Ascending aorta (tissue), 2 donors: ENCODE measurements at regions of chr18 and their contacts with region 1.

Region 1: DNA sequence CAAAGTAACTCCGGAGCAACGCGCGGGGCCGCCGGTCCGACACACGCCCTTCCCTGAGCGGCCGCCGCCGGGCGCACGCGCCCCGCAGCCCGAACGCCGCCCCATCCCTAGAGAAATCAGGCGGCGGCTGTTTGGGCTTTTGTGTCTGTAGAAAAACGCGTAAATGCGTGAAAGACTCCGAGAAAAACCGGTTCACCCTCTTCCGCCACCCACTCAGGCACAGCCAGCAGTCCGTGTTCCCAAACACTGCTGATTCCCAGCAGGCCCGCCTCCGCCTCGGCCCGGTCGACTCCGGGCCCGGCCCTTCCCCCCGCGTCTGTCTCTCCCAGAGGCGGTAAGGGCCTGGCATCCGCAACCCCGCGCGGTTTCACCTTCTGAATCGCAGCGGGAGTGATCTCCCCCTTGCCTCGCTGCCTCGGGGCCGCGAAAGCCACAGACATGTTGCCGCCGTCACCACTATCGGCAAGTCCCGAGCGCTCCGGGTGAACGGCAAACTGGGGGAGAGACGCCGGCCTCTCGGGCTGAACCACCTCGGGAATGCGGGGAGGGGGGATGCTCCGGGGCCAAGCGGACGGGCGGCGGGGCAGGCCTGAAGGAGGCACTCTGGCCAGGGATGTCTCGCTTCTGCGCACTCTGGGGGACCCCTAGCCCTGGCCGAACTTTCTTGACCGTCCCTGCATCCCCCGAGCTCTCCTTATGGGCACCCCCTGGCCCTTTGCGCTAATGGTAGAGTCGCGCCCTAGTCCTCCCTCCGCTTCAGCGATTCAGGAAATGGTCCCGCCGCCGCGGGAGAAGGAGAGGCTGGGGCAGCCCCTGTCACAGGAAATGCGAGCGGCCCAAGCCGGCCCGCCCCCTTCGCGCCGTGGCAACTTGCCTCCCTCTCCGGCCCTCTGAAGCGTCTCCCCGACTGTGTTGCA is at the start of gene SS18:
- DNase-seq: peak; percentile 67 to 97
- H3K4me3 ChIP-seq: peak within 1 kb of the TSS; percentile 79 to 94
- H3K27ac ChIP-seq: peak within 1 kb of the TSS; percentile 97 to 99
- H3K4me1 ChIP-seq: peaks cover 0 to 13% of the 10 kb centered on the region in 2 donors
- H3K27me3 ChIP-seq: no peaks in the 10 kb centered on the region
- CTCF ChIP-seq: peak in 1 of 3 experiments; percentile 4
- total RNA-seq, gene SS18: 31.0 TPM

Region 2: DNA sequence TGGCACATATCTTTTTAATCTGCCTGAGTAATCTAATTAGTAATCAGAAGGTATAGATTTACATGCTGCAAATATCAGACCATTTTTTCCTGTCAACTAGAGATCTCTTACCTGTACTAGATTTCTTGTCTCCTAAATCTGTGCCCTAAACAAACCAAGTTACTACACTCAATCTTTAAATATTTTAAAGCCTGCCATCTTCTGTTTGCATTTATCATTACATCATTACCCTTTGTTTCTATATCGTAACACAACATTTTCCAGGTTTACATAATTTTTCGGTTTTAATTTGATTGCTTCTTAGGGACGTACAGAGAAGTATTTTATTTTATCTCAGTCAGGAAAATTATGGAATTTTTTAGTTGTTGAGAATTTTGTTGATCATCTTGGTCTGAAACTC is 69.0 kb after region 1 on chr18:
- intact Hi-C with region 1: no loop called
- DNase-seq: no peak
- H3K4me3 ChIP-seq: no peak overlapping the region
- H3K27ac ChIP-seq: no peak overlapping the region
- H3K4me1 ChIP-seq: no peaks in the 10 kb centered on the region
- H3K27me3 ChIP-seq: no peaks in the 10 kb centered on the region
- CTCF ChIP-seq: no peak

Region 3: DNA sequence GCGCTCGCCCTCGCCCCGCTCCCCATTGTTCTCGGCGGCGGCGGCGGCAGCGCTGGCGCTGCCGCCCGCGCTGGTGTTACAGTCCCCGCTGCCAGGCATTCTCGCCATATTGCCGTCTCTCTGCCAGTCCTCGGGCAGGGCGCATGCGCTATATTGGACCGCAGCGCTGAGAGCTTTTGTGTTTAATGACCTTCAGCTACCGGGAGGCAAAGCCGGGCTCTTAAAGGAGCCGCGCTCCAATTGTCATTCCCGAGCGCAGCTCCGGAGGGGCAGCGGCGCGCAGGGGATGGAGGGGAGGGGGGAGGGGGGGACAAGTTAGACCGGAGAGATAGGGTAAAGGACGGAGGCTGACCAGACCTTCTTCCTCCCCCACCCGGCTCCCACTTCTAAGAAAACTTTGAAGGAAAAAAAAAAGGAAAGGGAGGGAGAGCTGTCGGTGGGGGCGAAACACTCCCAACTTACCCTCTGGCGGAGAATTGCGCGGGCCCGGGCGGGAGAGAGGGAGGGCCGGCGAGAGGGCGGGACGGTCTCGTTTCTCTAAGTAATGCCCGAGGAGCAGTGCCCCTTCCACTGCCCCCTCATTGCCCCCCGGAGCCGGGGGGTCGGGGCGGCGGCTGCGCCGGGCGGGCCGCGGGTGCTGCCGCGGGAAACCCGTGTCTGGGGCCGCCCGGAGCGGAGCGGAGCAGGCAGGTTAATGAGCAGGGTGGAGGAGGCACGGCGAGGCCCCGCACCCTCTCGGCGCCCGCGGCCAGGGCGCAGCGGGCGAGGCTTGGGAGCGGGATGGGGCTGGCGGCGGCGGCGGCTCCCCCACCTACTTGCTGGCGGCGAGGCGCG is 458.3 kb after region 1 on chr18 and contains the start of gene KCTD1:
- intact Hi-C with region 1: loop called (anchors 5 kb)
- DNase-seq: peak; percentile 18 to 89
- H3K4me3 ChIP-seq: peak within 1 kb of the TSS; percentile 91 to 92
- H3K27ac ChIP-seq: peak within 1 kb of the TSS; percentile 84
- H3K4me1 ChIP-seq: peaks cover 3 to 17% of the 10 kb centered on the region in 2 donors
- H3K27me3 ChIP-seq: no peaks in the 10 kb centered on the region
- CTCF ChIP-seq: no peak
- total RNA-seq, gene KCTD1: 1.3 TPM

Region 4: DNA sequence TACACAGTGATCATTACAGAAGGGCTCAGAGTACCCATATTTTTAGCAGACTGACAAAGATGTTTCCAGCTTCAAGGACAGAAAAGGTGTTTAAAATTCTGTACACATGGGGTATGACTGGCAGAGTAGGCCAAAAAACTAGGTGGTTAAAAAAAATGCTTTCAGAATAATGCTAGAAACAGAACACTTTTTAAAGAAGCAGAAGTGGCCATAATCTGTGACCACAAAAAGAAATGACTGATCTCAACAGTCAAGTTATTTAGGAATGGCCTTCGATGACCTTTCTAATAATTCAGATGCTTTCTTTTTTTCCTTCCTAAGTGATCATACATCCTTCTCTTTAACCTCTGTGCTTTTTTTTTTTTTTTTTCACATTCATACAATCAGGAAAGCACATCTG is 779.3 kb after region 1 on chr18:
- intact Hi-C with region 1: no loop called
- DNase-seq: no peak
- H3K4me3 ChIP-seq: no peak overlapping the region
- H3K27ac ChIP-seq: no peak overlapping the region
- H3K4me1 ChIP-seq: no peaks in the 10 kb centered on the region
- H3K27me3 ChIP-seq: no peaks in the 10 kb centered on the region
- CTCF ChIP-seq: no peak